HAP-1 (cell line): ENCODE measurements at regions of chr15 and their contacts with region 1.

Region 1: DNA sequence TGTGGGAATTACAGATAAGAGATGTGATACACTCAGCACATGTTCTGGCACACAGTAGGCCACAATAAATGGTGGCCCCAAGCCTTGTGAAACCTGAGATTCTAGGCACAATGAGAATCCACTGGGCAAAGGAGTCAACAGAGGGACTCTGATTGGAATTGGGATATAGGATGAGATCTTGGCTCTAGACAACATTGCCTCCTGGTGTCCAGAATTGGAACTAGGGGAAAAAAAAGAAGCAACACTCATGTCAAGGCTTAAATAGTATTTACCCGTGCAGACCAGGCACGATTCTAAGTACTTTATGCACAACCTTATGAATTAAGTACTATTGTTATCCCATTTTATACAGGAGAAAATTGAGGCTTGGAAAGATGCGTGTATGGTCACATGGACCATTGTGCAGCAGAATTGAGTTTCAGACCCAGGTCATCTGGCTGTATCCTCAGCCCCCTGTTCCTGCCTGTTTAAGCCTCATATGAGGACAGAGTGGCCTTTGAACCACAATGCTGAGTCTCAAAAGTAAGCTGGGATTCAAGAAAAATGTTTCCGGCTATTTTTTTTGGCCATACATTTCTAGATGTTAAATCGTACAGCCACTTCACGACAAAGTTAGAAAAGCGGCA is 124.8 kb downstream of the SV2B start:
- DNase-seq: peak; percentile 51 to 61
- H3K4me3 ChIP-seq: no peak overlapping the region
- H3K4me1 ChIP-seq: no peaks in the 10 kb centered on the region
- H3K27me3 ChIP-seq: peaks cover 2% of the 10 kb centered on the region; the same call in 1 of the 2 replicates

Region 2: DNA sequence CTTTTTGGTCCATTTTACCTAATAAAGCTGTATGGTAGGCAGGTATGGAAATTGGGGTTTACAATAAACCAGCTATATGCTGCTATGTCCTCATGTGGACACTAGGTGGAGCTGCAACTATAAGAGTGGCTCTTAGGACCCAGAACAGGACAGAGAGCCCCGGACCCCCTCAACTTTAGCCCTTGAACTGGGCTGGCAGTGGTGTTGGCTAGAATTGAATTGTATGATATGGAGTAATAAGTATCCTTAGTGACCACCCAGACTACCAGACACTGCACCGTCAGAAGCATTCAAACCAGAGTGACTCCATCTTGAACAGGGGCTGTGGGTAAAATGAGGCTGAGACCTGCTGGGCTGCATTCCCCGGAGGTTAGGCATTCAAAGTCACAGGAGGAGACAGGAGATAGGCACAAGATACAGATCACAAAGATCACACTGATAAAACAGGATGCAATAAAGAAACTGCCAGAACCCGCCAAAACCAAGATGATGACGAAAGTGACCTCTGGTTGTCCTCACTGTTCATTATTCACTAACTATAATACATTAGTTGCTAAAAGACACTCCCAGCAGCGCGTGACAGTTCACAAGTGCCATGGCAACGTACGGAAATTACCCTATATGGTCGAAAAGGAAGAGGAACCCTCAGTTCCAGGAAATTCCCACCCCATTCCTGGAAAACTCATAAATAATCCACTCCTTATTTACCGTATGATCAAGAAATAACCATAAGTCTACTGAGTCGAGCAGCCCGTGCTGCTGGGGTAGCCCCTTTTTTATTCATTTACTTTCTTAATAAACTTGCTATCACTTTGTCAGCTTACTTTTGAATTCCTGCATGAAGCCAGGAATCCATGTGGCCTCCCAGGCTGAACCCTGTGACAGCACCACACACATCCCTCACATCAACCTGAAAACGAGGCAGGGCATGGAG is 576.5 kb before region 1 on chr15:
- in situ Hi-C with region 1: loop called (anchors 25 kb)
- DNase-seq: peak; percentile 63 to 77
- H3K4me3 ChIP-seq: no peak overlapping the region
- H3K4me1 ChIP-seq: peaks cover 5% of the 10 kb centered on the region; the same call in 1 of the 2 replicates
- H3K27me3 ChIP-seq: no peaks in the 10 kb centered on the region

Region 3: DNA sequence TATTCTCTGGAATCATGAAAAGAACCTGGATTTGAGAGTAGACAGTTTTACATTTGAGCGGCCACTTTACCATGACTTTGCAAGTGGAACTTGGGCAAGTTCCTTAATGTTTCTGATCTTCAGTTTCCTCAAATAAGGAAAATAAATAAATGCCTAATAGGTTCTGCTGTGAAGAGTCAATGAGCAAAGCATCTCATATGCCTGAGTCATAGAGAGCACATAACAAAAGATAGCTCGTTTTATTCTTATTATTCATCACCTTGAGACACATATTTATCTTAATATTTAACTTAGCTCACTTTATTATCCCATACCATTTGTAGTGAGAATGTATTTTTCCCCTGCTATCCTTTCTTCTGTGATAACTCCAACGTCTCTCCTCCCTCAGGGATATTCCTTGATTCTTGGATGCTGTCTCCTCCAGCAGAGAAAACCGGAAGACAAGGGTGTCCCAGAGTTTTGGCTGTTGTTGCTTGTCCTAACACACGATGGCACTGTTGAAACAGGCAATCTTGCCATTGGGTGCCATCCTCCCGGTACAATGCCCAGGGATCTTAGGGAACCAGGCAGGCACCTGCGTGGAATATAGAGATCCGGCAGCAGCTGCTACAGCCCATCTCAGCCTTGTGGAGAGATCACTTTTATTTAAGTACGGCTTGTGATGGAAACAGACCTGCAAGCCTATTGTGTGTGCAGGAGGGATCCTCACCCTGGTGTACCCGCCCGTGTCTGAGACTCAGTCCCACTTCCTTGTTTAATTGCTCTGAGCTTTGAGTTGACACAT is 169.1 kb before region 1 on chr15:
- in situ Hi-C with region 1: loop called (anchors 5 kb)
- DNase-seq: peak; percentile 53 to 74
- H3K4me3 ChIP-seq: no peak overlapping the region
- H3K4me1 ChIP-seq: no peaks in the 10 kb centered on the region
- H3K27me3 ChIP-seq: peaks cover 58% of the 10 kb centered on the region

Region 4: GRCh38 chr15:91113030-91113429 is 111.8 kb before region 1 on chr15:
- in situ Hi-C with region 1: no loop called
- DNase-seq: no peak
- H3K4me3 ChIP-seq: no peak overlapping the region
- H3K4me1 ChIP-seq: no peaks in the 10 kb centered on the region
- H3K27me3 ChIP-seq: no peaks in the 10 kb centered on the region

Region 5: GRCh38 chr15:92043263-92043662 is 818.4 kb after region 1 on chr15:
- in situ Hi-C with region 1: no loop called
- DNase-seq: no peak
- H3K4me3 ChIP-seq: no peak overlapping the region
- H3K4me1 ChIP-seq: no peaks in the 10 kb centered on the region
- H3K27me3 ChIP-seq: no peaks in the 10 kb centered on the region